A673 (cell line): ENCODE measurements at regions of chr4 and their contacts with region 1.

Region 1: DNA sequence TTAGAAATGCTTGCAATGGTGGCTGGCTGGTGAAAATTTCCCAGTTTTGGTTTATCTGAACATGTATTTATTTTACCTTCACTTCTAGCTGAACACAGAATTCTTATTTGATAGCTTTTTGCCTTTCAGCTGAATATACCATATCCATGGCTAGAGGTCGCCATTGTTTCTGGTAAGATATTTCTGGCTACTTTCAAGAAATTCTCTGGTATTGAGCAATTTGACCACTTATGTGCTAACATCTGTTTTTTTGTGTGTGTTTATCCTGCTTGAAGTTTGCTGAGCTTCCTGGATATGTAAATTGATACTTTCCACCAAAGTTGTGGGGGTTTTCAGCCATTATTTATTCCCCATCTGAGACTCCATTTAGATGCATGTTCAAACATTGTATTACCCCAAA is 75.4 kb downstream of the FBXW7 start:
- DNase-seq: peak; percentile 79
- H3K4me3 ChIP-seq: no peak overlapping the region
- H3K27ac ChIP-seq: no peak overlapping the region
- H3K4me1 ChIP-seq: peaks cover 34% of the 10 kb centered on the region
- H3K27me3 ChIP-seq: no peaks in the 10 kb centered on the region
- CTCF ChIP-seq: peak; percentile 61

Region 2: DNA sequence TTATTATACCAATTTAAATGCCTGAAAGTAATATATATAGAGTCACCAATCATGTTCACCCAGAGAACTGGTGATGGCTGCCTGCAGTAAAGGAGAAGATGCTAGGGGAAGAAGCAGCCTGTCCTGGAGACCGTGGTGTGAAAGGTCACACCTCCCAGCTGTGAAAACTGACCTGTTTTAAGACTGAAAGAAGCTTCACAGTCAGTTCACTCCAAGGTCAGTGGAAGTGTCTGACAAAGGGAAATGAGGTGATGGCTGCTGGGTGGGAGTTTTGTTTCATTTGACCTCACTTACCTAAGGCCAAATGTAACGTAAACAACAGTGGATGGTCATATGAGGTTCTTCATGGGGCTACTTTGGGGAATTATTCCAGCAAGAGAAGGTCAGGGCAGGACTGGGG is 347.6 kb before region 1 on chr4:
- CTCF ChIA-PET with region 1: no interaction called
- POLR2A ChIA-PET with region 1: no interaction called
- intact Hi-C with region 1: no loop called
- DNase-seq: no peak
- H3K4me3 ChIP-seq: no peak overlapping the region
- H3K27ac ChIP-seq: no peak overlapping the region
- H3K4me1 ChIP-seq: peaks cover 54% of the 10 kb centered on the region
- H3K27me3 ChIP-seq: no peaks in the 10 kb centered on the region
- CTCF ChIP-seq: no peak

Region 3: DNA sequence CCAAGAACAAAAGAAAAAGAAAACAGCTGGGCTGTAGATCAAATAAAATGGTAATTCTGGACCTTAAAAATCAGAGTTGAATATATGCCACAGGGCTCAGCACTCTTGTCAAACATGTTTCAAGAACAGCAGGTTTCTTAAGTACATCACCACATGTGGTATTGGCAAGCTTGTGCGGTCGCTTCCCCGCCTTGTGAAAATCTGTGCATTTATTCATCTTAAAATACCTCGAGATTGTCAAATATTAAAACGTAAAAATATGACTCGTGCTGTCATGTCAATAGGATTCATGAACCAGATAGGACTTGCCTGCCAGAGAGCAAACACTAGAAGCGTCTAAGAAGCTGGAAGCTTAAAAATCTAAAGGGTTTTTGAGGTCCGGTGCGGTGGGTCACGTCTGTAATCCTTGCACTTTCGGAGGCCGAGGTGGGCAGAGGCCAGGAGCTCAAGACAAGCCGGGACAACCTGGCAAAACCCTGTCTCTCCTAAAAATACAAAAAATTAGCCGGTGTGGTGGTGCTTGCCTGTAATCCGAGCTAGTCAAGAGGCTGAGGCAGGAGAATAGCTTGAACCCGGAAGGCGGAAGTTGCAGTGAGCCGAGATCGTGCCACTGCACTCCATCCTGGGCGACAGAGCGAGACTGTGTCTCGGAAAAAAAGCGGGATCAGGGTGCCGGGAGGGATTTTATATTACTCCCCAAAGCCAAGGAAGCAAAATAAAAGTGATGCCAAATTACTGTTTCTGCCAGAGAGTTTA is 259.5 kb after region 1 on chr4:
- CTCF ChIA-PET with region 1: no interaction called
- POLR2A ChIA-PET with region 1: no interaction called
- intact Hi-C with region 1: loop called (anchors 5 kb)
- DNase-seq: peak; percentile 52
- H3K4me3 ChIP-seq: peak overlapping the region; percentile 29
- H3K27ac ChIP-seq: no peak overlapping the region
- H3K4me1 ChIP-seq: no peaks in the 10 kb centered on the region
- H3K27me3 ChIP-seq: no peaks in the 10 kb centered on the region
- CTCF ChIP-seq: no peak

Region 4: GRCh38 chr4:152831416-152831815 is 370.9 kb after region 1 on chr4:
- CTCF ChIA-PET with region 1: no interaction called
- POLR2A ChIA-PET with region 1: no interaction called
- intact Hi-C with region 1: no loop called
- DNase-seq: no peak
- H3K4me3 ChIP-seq: no peak overlapping the region
- H3K27ac ChIP-seq: no peak overlapping the region
- H3K4me1 ChIP-seq: no peaks in the 10 kb centered on the region
- H3K27me3 ChIP-seq: no peaks in the 10 kb centered on the region
- CTCF ChIP-seq: no peak